CD4-positive, alpha-beta memory T cell (primary cell): ENCODE measurements at regions of chr5 and their contacts with region 1.

Region 1: DNA sequence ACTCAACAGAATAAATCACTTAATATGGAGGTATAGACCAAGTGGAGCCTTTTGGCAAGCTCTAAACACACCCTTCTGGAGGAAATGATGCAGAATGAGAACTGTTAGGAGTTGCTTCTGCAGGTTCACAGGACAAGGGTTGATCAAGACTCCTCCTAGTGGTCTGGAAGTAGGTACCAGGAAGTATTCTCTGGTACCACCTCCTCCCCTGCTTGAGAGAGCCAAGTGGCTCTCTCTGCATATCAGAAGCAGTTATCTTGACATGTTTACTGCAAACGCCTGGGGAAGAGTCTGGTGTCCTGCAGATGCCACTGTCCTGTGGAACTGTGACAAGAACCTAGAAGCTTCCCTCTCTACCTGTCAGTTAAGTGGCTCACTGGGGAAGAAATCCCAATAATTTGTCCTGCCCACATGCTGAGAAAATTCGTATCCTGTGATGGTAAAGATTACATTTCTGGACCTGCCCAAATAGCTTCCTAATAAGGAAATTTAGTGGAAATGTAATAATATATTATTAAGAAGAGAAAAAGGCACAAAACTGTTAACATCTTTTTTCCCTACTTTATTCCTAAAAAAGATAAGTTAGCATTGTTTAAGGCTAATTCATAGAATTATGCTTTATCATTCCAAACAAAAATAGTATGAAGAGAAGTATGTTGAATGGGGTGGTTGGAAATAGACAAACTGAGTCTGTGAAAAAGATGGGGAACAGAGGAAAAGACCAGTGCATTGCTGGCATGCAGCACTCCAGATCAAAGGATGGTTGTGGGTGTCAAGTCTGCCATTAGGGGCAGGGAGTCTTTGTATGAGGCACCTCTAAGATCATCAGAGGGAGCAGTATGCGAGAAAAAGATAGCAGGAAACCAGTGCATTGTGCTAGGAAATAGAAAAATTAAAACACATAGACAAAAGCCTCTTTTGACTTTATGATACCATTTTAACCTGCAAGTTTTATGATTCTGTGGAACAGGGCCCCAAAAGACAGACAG is 118.8 kb downstream of the CDC42SE2 start:
- DNase-seq: peak; percentile 79 to 89 (median 84)
- H3K4me3 ChIP-seq: peak overlapping the region in 1 of 2 donors; percentile 33
- H3K4me3 Mint-ChIP-seq: peak overlapping the region; percentile 67 to 90 (median 76)
- H3K27ac ChIP-seq: peak overlapping the region; percentile 99
- H3K27ac Mint-ChIP-seq: peak overlapping the region; percentile 96 to 99 (median 98)
- H3K4me1 ChIP-seq: peaks cover 100% of the 10 kb centered on the region
- H3K4me1 Mint-ChIP-seq: peaks cover 67 to 100% (median 86%) of the 10 kb centered on the region in 4 donors
- H3K27me3 ChIP-seq: no peaks in the 10 kb centered on the region
- H3K27me3 Mint-ChIP-seq: no peaks in the 10 kb centered on the region

Region 2: GRCh38 chr5:131170540-131171275 is 212.0 kb before region 1 on chr5 and contains the start of gene LYRM7:
- CTCF ChIA-PET with region 1: interaction called, 12 read pairs
- POLR2A ChIA-PET with region 1: interaction called, 17 read pairs
- intact Hi-C with region 1: loop called (anchors 1 kb)
- DNase-seq: peak; percentile 94 to 99 (median 97)
- H3K4me3 ChIP-seq: peak within 1 kb of the TSS; percentile 67 to 69
- H3K4me3 Mint-ChIP-seq: peak within 1 kb of the TSS; percentile 95 to 100 (median 98)
- H3K27ac ChIP-seq: peak within 1 kb of the TSS; percentile 88
- H3K27ac Mint-ChIP-seq: peak within 1 kb of the TSS; percentile 91 to 99 (median 97)
- H3K4me1 ChIP-seq: peaks cover 31% of the 10 kb centered on the region
- H3K4me1 Mint-ChIP-seq: peaks cover 33 to 72% (median 54%) of the 10 kb centered on the region in 4 donors
- H3K27me3 ChIP-seq: no peaks in the 10 kb centered on the region
- H3K27me3 Mint-ChIP-seq: no peaks in the 10 kb centered on the region
- total RNA-seq, gene LYRM7: 16.7 to 18.4 TPM

Region 3: GRCh38 chr5:131258733-131259132 is 124.0 kb before region 1 on chr5:
- CTCF ChIA-PET with region 1: interaction called, 68 read pairs
- POLR2A ChIA-PET with region 1: interaction called, 552 read pairs
- intact Hi-C with region 1: loop called (anchors 1 kb)
- DNase-seq: no peak
- H3K4me3 ChIP-seq: peak overlapping the region in 1 of 2 donors; percentile 35
- H3K4me3 Mint-ChIP-seq: peak overlapping the region; percentile 76 to 91 (median 82)
- H3K27ac ChIP-seq: peak overlapping the region; percentile 64
- H3K27ac Mint-ChIP-seq: peak overlapping the region; percentile 91 to 97 (median 94)
- H3K4me1 ChIP-seq: peaks cover 78% of the 10 kb centered on the region
- H3K4me1 Mint-ChIP-seq: peaks cover 48 to 85% (median 64%) of the 10 kb centered on the region in 4 donors
- H3K27me3 ChIP-seq: no peaks in the 10 kb centered on the region
- H3K27me3 Mint-ChIP-seq: no peaks in the 10 kb centered on the region

Region 4: GRCh38 chr5:131289738-131290137 is 93.0 kb before region 1 on chr5:
- CTCF ChIA-PET with region 1: interaction called, 26 read pairs
- POLR2A ChIA-PET with region 1: interaction called, 5 read pairs
- intact Hi-C with region 1: no loop called
- DNase-seq: peak in 1 of 5 donors; percentile 52
- H3K4me3 ChIP-seq: peak overlapping the region in 1 of 2 donors; percentile 23
- H3K4me3 Mint-ChIP-seq: peak overlapping the region; percentile 81 to 88 (median 86)
- H3K27ac ChIP-seq: peak overlapping the region; percentile 56
- H3K27ac Mint-ChIP-seq: peak overlapping the region; percentile 86 to 98 (median 94)
- H3K4me1 ChIP-seq: peaks cover 90% of the 10 kb centered on the region
- H3K4me1 Mint-ChIP-seq: peaks cover 41 to 82% (median 60%) of the 10 kb centered on the region in 4 donors
- H3K27me3 ChIP-seq: no peaks in the 10 kb centered on the region
- H3K27me3 Mint-ChIP-seq: no peaks in the 10 kb centered on the region

Region 5: GRCh38 chr5:131338051-131338453 is 44.6 kb before region 1 on chr5:
- CTCF ChIA-PET with region 1: interaction called, 11 read pairs
- POLR2A ChIA-PET with region 1: interaction called, 27 read pairs
- intact Hi-C with region 1: loop called (anchors 2 kb)
- DNase-seq: no peak
- H3K4me3 ChIP-seq: no peak overlapping the region
- H3K4me3 Mint-ChIP-seq: peak overlapping the region in 7 of 8 donors; percentile 36 to 84 (median 70)
- H3K27ac ChIP-seq: peak overlapping the region; percentile 52
- H3K27ac Mint-ChIP-seq: peak overlapping the region; percentile 63 to 97 (median 94)
- H3K4me1 ChIP-seq: peaks cover 58% of the 10 kb centered on the region
- H3K4me1 Mint-ChIP-seq: peaks cover 62 to 95% (median 80%) of the 10 kb centered on the region in 4 donors
- H3K27me3 ChIP-seq: no peaks in the 10 kb centered on the region
- H3K27me3 Mint-ChIP-seq: no peaks in the 10 kb centered on the region

Region 6: GRCh38 chr5:131394128-131394527 is 11.4 kb after region 1 on chr5:
- CTCF ChIA-PET with region 1: interaction called, 31 read pairs
- POLR2A ChIA-PET with region 1: interaction called, 69 read pairs
- intact Hi-C with region 1: loop called (anchors 2 kb)
- DNase-seq: peak; percentile 75 to 88 (median 83)
- H3K4me3 ChIP-seq: no peak overlapping the region
- H3K4me3 Mint-ChIP-seq: peak overlapping the region; percentile 41 to 79 (median 73)
- H3K27ac ChIP-seq: peak overlapping the region; percentile 85
- H3K27ac Mint-ChIP-seq: peak overlapping the region; percentile 95 to 99 (median 97)
- H3K4me1 ChIP-seq: peaks cover 77% of the 10 kb centered on the region
- H3K4me1 Mint-ChIP-seq: peaks cover 67 to 93% (median 80%) of the 10 kb centered on the region in 4 donors
- H3K27me3 ChIP-seq: no peaks in the 10 kb centered on the region
- H3K27me3 Mint-ChIP-seq: no peaks in the 10 kb centered on the region